Activated T-helper 1 cell treated with anti-CD3 and anti-CD28 coated beads, Interleukin-12 subunit alpha, Interleukin-12 subunit beta, Interleukin-2, Interleukin-4 antibody, amounts not matched to agents 30 ng/mL and 10 ng/mL and 1 ng/mL, durations not matched to agents 14 hours and 24 hours and 36 hours (primary cell): ENCODE measurements at regions of chr11 and their contacts with region 1.

Region 1: DNA sequence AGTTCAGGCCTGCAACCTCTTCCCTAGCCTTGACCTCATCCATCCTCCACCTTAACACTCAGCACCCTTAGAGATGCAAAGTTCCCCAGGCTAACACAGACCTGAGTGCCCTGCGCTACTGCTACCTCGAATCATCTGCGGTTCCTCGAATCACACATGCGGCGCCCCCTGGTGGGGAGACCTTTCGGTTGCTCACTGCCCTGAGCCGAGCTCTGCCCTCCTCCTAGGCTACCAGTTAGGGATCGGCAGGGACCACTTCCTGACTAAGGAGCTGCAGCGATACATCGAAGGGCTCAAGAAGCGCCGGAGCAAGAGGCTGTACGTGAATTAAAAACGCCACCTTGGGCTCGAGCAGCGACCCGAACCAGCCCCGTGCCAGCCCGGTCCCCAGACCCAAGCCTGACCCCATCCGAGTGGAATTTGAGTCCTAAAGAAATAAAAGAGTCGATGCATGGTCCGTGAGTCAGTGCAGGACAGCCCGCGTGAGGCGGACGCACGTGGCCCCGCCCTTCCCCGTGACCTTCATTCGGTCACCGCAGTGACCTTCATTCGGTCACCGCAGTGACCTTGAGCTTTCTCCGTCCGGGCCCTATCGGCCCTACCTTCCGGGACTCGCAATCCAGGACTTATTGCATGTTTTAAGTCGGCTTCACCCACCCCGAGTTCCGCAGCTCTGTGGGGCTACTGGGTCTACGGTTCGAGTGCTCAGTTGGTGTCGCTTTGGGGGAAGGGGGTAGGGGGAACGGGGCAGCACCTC is 830 bp upstream of the ESRRA start:
- DNase-seq: peak; percentile 86
- H3K4me3 Mint-ChIP-seq: peak overlapping the region; percentile 91
- H3K27ac Mint-ChIP-seq: peak overlapping the region; percentile 98
- H3K4me1 Mint-ChIP-seq: peaks cover 18% of the 10 kb centered on the region
- H3K27me3 Mint-ChIP-seq: peaks cover 19% of the 10 kb centered on the region

Region 2: DNA sequence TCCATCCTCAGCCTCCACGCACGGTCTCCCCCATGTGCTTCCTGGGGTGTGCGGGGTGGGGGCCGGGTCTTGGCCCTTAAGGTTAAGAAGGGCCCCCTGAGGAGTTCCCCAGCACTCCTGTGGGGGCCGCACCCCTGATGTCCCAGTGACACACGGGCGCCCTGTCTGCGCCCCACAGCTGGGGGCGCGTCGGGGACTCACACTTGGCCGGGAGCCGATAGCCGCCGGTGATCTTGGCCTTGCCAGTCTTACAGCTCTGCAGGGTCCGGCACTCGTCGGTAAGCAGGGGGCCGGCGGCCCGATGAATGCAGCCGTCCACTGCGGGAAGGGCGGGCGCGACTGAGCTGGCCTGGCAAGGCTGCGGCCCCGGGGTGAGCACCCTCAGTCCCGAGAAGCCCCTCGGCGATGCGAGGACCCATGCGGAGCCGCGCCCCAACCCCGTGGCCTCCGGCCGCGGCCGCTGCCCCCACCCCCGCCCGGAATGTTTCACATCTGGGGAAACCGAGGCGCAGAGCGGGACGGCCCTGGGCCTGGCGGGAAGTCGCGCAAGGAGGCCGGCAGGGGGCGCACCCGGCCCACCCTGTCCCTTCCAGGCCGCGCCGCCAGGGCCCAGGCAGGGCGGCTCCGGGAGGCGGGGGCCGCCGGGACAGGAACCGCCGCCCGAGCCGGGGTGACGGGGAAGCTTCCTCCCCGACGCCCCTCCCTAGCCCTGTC is 304.3 kb before region 1 on chr11:
- intact Hi-C with region 1: loop called (anchors 2 kb)
- DNase-seq: peak; percentile 71
- H3K4me3 Mint-ChIP-seq: no peak overlapping the region
- H3K27ac Mint-ChIP-seq: no peak overlapping the region
- H3K4me1 Mint-ChIP-seq: no peaks in the 10 kb centered on the region
- H3K27me3 Mint-ChIP-seq: no peaks in the 10 kb centered on the region

Region 3: DNA sequence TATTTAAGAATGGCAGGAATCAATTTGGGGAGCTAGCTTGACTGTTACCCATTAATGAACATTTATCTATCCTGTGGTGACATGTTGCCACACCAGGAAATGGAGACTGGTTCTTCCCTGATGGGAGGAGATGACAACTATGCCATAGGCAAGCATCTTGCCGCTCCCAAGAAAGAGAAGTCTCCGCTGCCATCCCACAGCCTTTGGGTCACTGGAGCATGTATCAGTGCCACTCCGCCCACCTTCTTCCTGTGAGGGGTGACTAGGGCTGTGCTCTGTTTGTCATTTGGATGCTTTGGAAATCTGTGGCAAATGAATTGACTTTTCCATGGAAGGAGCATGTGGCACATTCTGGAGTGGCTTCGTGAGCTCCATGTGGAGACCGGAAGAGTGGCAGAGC is 112.1 kb before region 1 on chr11:
- intact Hi-C with region 1: no loop called
- DNase-seq: no peak
- H3K4me3 Mint-ChIP-seq: no peak overlapping the region
- H3K27ac Mint-ChIP-seq: no peak overlapping the region
- H3K4me1 Mint-ChIP-seq: peaks cover 41% of the 10 kb centered on the region
- H3K27me3 Mint-ChIP-seq: no peaks in the 10 kb centered on the region

Region 4: GRCh38 chr11:64204464-64204989 is 100.0 kb before region 1 on chr11:
- intact Hi-C with region 1: loop called (anchors 1 kb)
- DNase-seq: peak; percentile 61
- H3K4me3 Mint-ChIP-seq: peak overlapping the region; percentile 78
- H3K27ac Mint-ChIP-seq: peak overlapping the region; percentile 70
- H3K4me1 Mint-ChIP-seq: peaks cover 39% of the 10 kb centered on the region
- H3K27me3 Mint-ChIP-seq: no peaks in the 10 kb centered on the region

Region 5: DNA sequence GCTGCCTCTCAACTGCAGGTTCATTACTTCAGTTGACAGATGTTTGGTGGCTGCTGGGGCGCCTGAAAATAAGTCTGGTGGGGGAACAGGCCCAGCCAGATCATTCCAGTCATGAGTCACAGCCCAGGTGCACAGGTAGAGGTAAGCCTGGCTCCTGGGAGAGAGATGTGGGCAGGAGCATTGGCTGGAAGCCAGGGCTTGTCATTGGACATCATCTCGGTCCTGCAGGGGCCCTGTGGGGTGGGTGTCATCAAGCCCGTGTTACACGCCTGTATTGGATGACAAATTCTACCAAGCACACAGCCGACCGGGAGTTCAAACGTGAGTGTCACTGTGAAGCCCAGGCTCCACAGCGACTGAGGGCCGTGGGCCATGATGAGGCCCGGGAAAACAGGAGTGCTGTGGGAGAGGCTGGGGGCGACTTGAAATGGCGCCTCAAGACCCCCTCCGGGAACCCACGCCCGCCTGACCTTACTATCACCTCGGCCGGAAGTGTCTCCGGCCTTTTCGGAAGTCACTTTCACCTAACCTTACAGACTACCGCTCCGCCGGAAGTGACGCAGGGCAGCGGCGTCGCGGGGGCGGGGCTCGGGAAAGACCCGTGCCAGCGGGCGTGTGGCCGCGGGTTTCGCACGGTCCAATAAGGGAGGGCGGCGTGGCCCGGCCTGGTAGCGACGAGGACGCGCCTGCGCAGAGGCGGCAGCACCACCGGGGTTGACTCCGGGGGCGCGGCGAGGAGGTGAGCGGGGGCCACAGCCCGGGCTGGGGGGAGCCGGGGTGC is 63.9 kb before region 1 on chr11 and contains the start of gene FKBP2:
- intact Hi-C with region 1: loop called (anchors 1 kb)
- DNase-seq: peak; percentile 99
- H3K4me3 Mint-ChIP-seq: peak within 1 kb of the TSS; percentile 94
- H3K27ac Mint-ChIP-seq: peak within 1 kb of the TSS; percentile 94
- H3K4me1 Mint-ChIP-seq: peaks cover 36% of the 10 kb centered on the region
- H3K27me3 Mint-ChIP-seq: no peaks in the 10 kb centered on the region
- total RNA-seq, gene FKBP2: 32.6 and 34.3 TPM in 2 replicates

Region 6: GRCh38 chr11:64269380-64270234 is 34.9 kb before region 1 on chr11:
- intact Hi-C with region 1: loop called (anchors 1 kb)
- DNase-seq: peak; percentile 98
- H3K4me3 Mint-ChIP-seq: peak overlapping the region; percentile 89
- H3K27ac Mint-ChIP-seq: peak overlapping the region; percentile 97
- H3K4me1 Mint-ChIP-seq: peaks cover 31% of the 10 kb centered on the region
- H3K27me3 Mint-ChIP-seq: no peaks in the 10 kb centered on the region

Region 7: GRCh38 chr11:64291752-64292459 is 12.6 kb before region 1 on chr11:
- intact Hi-C with region 1: loop called (anchors 1 kb)
- DNase-seq: no peak
- H3K4me3 Mint-ChIP-seq: no peak overlapping the region
- H3K27ac Mint-ChIP-seq: no peak overlapping the region
- H3K4me1 Mint-ChIP-seq: peaks cover 7% of the 10 kb centered on the region
- H3K27me3 Mint-ChIP-seq: peaks cover 58% of the 10 kb centered on the region

Region 8: DNA sequence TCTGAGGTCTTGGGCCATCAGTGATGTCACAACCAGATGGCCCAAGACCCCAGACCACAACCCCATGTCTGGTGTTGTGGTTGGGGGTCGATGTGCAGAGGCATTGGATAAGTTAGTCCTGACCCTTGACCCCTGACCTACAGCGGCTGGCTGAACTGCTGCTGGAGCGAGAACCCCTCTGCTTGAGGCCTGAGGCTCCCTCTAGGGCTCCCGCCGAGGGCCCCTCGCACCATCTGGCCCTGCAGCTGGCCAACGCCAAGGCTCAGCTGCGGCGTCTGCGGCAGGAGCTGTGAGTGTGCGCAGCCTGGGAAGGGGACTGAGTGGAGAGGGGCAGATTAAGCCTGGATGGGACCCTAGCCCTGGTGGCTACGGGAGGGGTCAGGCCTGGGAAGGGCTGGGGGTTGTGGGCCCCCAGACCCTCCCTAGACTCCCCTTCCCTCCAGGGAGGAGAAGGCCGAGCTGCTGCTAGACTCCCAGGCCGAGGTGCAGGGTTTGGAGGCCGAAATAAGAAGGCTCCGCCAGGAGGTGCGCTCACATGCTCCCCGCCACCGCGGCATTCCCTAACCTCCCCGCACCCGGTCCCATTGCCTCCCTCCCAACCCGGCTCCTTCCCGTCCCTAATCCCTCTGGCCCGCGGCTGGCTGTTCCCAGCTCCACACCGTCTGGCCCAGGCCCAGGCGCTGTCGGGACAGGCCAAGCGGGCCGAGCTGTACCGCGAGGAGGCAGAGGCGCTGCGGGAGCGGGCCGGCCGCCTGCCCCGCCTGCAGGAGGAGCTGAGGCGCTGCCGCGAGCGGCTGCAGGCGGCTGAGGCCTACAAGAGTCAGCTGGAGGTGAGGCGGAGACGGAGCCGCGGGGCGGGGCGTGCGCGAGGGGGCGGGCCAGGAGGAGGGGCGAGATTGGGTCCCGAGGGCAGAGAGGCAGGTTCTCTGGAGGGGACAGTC is 37.6 kb after region 1 on chr11:
- intact Hi-C with region 1: loop called (anchors 1 kb)
- DNase-seq: peak; percentile 91
- H3K4me3 Mint-ChIP-seq: peak overlapping the region; percentile 39
- H3K27ac Mint-ChIP-seq: no peak overlapping the region
- H3K4me1 Mint-ChIP-seq: peaks cover 32% of the 10 kb centered on the region
- H3K27me3 Mint-ChIP-seq: no peaks in the 10 kb centered on the region